Dendritic cell treated with granulocyte-macrophage colony-stimulating factor and Interleukin-4, amounts not matched to agents 40 ng/mL and 50 ng/mL, for 4 days (primary cell): ENCODE measurements at regions of chr1 and their contacts with region 1.

Region 1: GRCh38 chr1:151459331-151460046 is at the start of gene POGZ:
- H3K4me3 Mint-ChIP-seq: peak within 1 kb of the TSS; percentile 78
- H3K27ac Mint-ChIP-seq: peak within 1 kb of the TSS; percentile 83
- H3K4me1 Mint-ChIP-seq: peaks cover 24% of the 10 kb centered on the region
- H3K27me3 Mint-ChIP-seq: peaks cover 16% of the 10 kb centered on the region

Region 2: GRCh38 chr1:151472856-151473731 is 13.6 kb after region 1 on chr1:
- intact Hi-C with region 1: loop called (anchors 1 kb)
- H3K4me3 Mint-ChIP-seq: peak overlapping the region; percentile 81
- H3K27ac Mint-ChIP-seq: peak overlapping the region; percentile 92
- H3K4me1 Mint-ChIP-seq: peaks cover 8% of the 10 kb centered on the region
- H3K27me3 Mint-ChIP-seq: no peaks in the 10 kb centered on the region